Mucosa of descending colon (tissue), 3 donors: ENCODE measurements at regions of chr6 and their contacts with region 1.

Region 1: GRCh38 chr6:25490018-25490801 is 161.8 kb upstream of the SCGN start:
- DNase-seq: peak; percentile 62 to 87 (median 72)
- ATAC-seq: peak; percentile 99
- H3K4me3 ChIP-seq: no peak overlapping the region
- H3K4me1 ChIP-seq: no peaks in the 10 kb centered on the region
- CTCF ChIP-seq: peak; percentile 58

Region 2: GRCh38 chr6:25266456-25267100 is 223.6 kb before region 1 on chr6:
- intact Hi-C with region 1: loop called (anchors 5 to 10 kb)
- DNase-seq: no peak
- ATAC-seq: no peak
- H3K4me3 ChIP-seq: no peak overlapping the region
- H3K4me1 ChIP-seq: no peaks in the 10 kb centered on the region
- CTCF ChIP-seq: no peak

Region 3: DNA sequence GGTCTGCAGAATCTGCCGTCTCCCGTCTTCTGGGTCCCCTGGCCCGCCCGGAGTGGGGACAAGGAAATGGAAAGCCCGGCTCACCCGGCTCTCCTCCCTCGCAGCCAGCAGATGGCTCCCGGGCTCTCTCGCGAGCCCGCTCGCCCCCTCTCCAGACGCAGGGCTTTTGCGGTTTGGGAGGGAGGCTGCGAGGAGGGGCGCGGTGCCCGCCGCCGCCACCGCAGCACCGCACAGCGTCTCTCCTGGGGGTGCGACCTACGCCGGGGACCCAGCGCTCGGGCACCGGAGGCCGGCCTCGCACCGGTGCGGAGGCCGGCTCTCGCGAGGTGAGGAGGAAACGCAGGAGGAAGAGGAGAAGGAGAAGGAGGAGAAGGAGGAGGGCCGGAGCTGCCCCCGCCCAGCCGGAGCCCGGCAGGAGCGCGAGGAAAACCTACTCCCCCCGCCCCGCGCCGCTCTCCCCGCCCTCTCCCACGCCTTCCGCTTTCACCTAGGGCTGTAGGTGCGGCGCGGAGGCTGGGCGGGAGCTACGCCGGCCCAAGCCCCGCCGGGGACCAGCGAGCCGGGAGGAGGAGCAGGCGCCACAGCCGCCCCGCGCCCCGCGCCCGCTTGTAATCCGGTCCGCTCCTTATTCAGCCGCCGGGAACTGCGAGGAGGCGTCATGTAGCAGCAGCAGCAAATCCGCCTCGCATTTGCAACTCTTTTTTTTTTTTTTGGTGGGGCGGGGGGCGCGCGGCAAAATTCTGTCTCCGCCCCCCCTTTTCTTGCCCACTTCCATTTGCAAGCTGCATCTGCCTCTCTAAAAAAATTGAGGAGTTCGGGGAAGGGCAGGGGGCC is 211.1 kb before region 1 on chr6 and contains the start of gene CARMIL1:
- intact Hi-C with region 1: loop called in 1 of 2 experiments (anchors 10 kb)
- DNase-seq: peak; percentile 94 to 95 (median 95)
- ATAC-seq: peak; percentile 92
- H3K4me3 ChIP-seq: peak within 1 kb of the TSS; percentile 48
- H3K4me1 ChIP-seq: peaks cover 23% of the 10 kb centered on the region
- CTCF ChIP-seq: peak; percentile 11
- total RNA-seq, gene CARMIL1: 21.8 to 61.0 (median 44.8) TPM